ENCODE measurements at regions of chr11 and their contacts with region 1.

Region 1: GRCh38 chr11:76207642-76208401 is 1.5 kb upstream of the WNT11 start:
- DNase-seq: peak; percentile 66 to 82 (median 74)
- H3K4me3 ChIP-seq: peak overlapping the region; percentile 94
- H3K4me3 Mint-ChIP-seq: peak overlapping the region; percentile 81 to 93 (median 87)
- H3K27ac ChIP-seq: no peak overlapping the region
- H3K27ac Mint-ChIP-seq: peak overlapping the region in 3 of 8 donors; percentile 13 to 78 (median 58)
- H3K4me1 ChIP-seq: peaks cover 23% of the 10 kb centered on the region
- H3K4me1 Mint-ChIP-seq: peaks cover 13 to 38% (median 18%) of the 10 kb centered on the region in 3 donors
- H3K27me3 ChIP-seq: peaks cover 44% of the 10 kb centered on the region
- H3K27me3 Mint-ChIP-seq: peaks cover 30 to 38% of the 10 kb centered on the region in 2 donors

Region 2: GRCh38 chr11:76225122-76225611 is 17.3 kb after region 1 on chr11:
- CTCF ChIA-PET with region 1: interaction called, 162 read pairs
- POLR2A ChIA-PET with region 1: no interaction called
- DNase-seq: no peak
- H3K4me3 ChIP-seq: no peak overlapping the region
- H3K4me3 Mint-ChIP-seq: no peak overlapping the region
- H3K27ac ChIP-seq: no peak overlapping the region
- H3K27ac Mint-ChIP-seq: peak overlapping the region in 2 of 8 donors; percentile 51 to 90
- H3K4me1 ChIP-seq: no peaks in the 10 kb centered on the region
- H3K4me1 Mint-ChIP-seq: no peaks in the 10 kb centered on the region
- H3K27me3 ChIP-seq: no peaks in the 10 kb centered on the region
- H3K27me3 Mint-ChIP-seq: peaks cover 4 to 11% of the 10 kb centered on the region in 2 donors

Region 3: DNA sequence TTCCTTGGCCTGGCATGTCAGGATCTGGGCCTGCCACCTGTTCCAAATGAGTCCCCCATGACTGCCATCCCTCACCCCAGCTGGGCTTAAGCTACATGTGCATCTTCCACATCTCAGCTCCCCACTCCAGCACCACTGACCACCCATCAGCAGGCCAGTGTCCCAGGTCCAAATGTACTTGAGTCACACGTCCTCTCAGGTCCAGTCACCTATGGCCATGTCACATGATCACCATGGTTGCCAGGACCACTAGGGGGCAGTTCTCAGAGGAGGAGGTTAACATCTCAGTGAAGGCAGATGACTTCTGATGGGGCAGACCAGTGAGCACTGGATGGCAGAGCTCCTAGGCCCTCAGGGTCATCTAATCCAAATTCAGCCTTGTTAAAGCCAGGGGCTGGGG is 40.4 kb after region 1 on chr11:
- CTCF ChIA-PET with region 1: interaction called, 17 read pairs
- POLR2A ChIA-PET with region 1: no interaction called
- DNase-seq: no peak
- H3K4me3 ChIP-seq: no peak overlapping the region
- H3K4me3 Mint-ChIP-seq: no peak overlapping the region
- H3K27ac ChIP-seq: no peak overlapping the region
- H3K27ac Mint-ChIP-seq: no peak overlapping the region
- H3K4me1 ChIP-seq: no peaks in the 10 kb centered on the region
- H3K4me1 Mint-ChIP-seq: no peaks in the 10 kb centered on the region
- H3K27me3 ChIP-seq: no peaks in the 10 kb centered on the region
- H3K27me3 Mint-ChIP-seq: peaks cover 5 to 15% of the 10 kb centered on the region in 2 donors

Region 4: GRCh38 chr11:76293189-76293631 is 85.4 kb after region 1 on chr11:
- CTCF ChIA-PET with region 1: interaction called, 15 read pairs
- POLR2A ChIA-PET with region 1: interaction called, 4 read pairs
- DNase-seq: no peak
- H3K4me3 ChIP-seq: no peak overlapping the region
- H3K4me3 Mint-ChIP-seq: peak overlapping the region in 6 of 7 donors; percentile 48 to 68 (median 66)
- H3K27ac ChIP-seq: no peak overlapping the region
- H3K27ac Mint-ChIP-seq: peak overlapping the region in 6 of 8 donors; percentile 26 to 68 (median 52)
- H3K4me1 ChIP-seq: peaks cover 24% of the 10 kb centered on the region
- H3K4me1 Mint-ChIP-seq: peaks cover 14 to 23% (median 19%) of the 10 kb centered on the region in 3 donors
- H3K27me3 ChIP-seq: no peaks in the 10 kb centered on the region
- H3K27me3 Mint-ChIP-seq: no peaks in the 10 kb centered on the region

Region 5: GRCh38 chr11:76318744-76319384 is 111.0 kb after region 1 on chr11:
- CTCF ChIA-PET with region 1: interaction called, 303 read pairs
- POLR2A ChIA-PET with region 1: no interaction called
- DNase-seq: peak; percentile 72 to 88 (median 77)
- H3K4me3 ChIP-seq: no peak overlapping the region
- H3K4me3 Mint-ChIP-seq: no peak overlapping the region
- H3K27ac ChIP-seq: no peak overlapping the region
- H3K27ac Mint-ChIP-seq: no peak overlapping the region
- H3K4me1 ChIP-seq: no peaks in the 10 kb centered on the region
- H3K4me1 Mint-ChIP-seq: no peaks in the 10 kb centered on the region
- H3K27me3 ChIP-seq: peaks cover 15% of the 10 kb centered on the region
- H3K27me3 Mint-ChIP-seq: peaks cover 26 to 41% of the 10 kb centered on the region in 2 donors

Region 6: GRCh38 chr11:76371170-76371569 is 163.3 kb after region 1 on chr11:
- CTCF ChIA-PET with region 1: no interaction called
- POLR2A ChIA-PET with region 1: no interaction called
- DNase-seq: no peak
- H3K4me3 ChIP-seq: no peak overlapping the region
- H3K4me3 Mint-ChIP-seq: peak overlapping the region in 1 of 7 donors; percentile 29
- H3K27ac ChIP-seq: no peak overlapping the region
- H3K27ac Mint-ChIP-seq: peak overlapping the region in 4 of 8 donors; percentile 17 to 94 (median 44)
- H3K4me1 ChIP-seq: peaks cover 23% of the 10 kb centered on the region
- H3K4me1 Mint-ChIP-seq: peaks cover 54 to 76% (median 70%) of the 10 kb centered on the region in 3 donors
- H3K27me3 ChIP-seq: no peaks in the 10 kb centered on the region
- H3K27me3 Mint-ChIP-seq: no peaks in the 10 kb centered on the region

Region 7: GRCh38 chr11:76408171-76408965 is 200.5 kb after region 1 on chr11:
- CTCF ChIA-PET with region 1: no interaction called
- POLR2A ChIA-PET with region 1: no interaction called
- DNase-seq: no peak
- H3K4me3 ChIP-seq: no peak overlapping the region
- H3K4me3 Mint-ChIP-seq: no peak overlapping the region
- H3K27ac ChIP-seq: no peak overlapping the region
- H3K27ac Mint-ChIP-seq: peak overlapping the region in 1 of 8 donors; percentile 32
- H3K4me1 ChIP-seq: no peaks in the 10 kb centered on the region
- H3K4me1 Mint-ChIP-seq: no peaks in the 10 kb centered on the region
- H3K27me3 ChIP-seq: peaks cover 4% of the 10 kb centered on the region
- H3K27me3 Mint-ChIP-seq: peaks cover 4 to 7% of the 10 kb centered on the region in 2 donors

Region 8: DNA sequence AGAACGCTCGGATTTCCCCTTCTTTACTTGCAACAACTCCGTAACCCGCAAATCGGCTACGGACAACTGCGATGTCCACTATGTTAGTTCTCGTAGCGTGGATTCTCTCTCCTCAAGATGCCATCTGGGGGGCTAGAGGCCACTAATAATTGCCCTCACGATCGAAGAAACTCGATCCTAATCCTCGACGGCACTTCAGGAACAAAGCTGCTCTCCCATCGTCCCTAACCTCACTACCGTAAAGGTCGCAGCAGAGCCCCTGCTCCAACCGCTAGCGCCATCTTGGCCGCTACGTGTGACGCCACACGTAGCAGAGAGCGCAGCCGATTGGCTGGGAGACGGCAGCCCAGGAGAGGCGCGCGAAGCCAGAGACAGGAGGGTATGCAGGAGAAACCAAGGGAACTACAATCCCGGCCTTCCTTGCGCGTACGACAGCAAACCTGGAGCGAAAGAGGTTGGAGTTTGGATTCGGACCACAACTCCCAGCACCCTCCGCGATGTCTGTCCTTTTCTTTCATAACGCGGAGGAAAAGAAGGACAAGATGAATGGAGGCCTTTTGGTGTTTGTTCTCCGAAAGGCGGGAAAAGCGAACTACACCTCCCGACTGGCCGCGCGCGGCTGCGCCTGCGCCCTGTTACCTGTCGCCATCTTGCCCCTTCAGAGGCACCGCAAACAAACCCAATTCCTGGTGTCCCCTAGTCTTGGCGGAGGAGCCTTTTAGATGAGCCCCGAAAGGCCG is 236.7 kb after region 1 on chr11 and contains the start of gene EMSY:
- CTCF ChIA-PET with region 1: interaction called, 15 read pairs
- POLR2A ChIA-PET with region 1: interaction called, 7 read pairs
- DNase-seq: peak; percentile 86 to 94 (median 90)
- H3K4me3 ChIP-seq: peak within 1 kb of the TSS; percentile 94
- H3K4me3 Mint-ChIP-seq: peak within 1 kb of the TSS; percentile 90 to 98 (median 97)
- H3K27ac ChIP-seq: peak within 1 kb of the TSS; percentile 93
- H3K27ac Mint-ChIP-seq: peak within 1 kb of the TSS; percentile 95 to 99 (median 97)
- H3K4me1 ChIP-seq: peaks cover 19% of the 10 kb centered on the region
- H3K4me1 Mint-ChIP-seq: peaks cover 38 to 53% (median 48%) of the 10 kb centered on the region in 3 donors
- H3K27me3 ChIP-seq: no peaks in the 10 kb centered on the region
- H3K27me3 Mint-ChIP-seq: peaks cover 0 to 4% of the 10 kb centered on the region in 2 donors
- total RNA-seq, gene EMSY: 28.2 to 28.8 TPM

Measured in CD8-positive, alpha-beta memory T cell (primary cell).